ENCODE measurements at regions of chr6 and their contacts with region 1.

Region 1: GRCh38 chr6:3251462-3252314 is 7.1 kb upstream of the PSMG4 start:
- DNase-seq: peak; percentile 88
- H3K4me3 Mint-ChIP-seq: no peak overlapping the region
- H3K27ac Mint-ChIP-seq: no peak overlapping the region
- H3K4me1 Mint-ChIP-seq: peaks cover 5% of the 10 kb centered on the region
- H3K27me3 Mint-ChIP-seq: peaks cover 15% of the 10 kb centered on the region

Region 2: DNA sequence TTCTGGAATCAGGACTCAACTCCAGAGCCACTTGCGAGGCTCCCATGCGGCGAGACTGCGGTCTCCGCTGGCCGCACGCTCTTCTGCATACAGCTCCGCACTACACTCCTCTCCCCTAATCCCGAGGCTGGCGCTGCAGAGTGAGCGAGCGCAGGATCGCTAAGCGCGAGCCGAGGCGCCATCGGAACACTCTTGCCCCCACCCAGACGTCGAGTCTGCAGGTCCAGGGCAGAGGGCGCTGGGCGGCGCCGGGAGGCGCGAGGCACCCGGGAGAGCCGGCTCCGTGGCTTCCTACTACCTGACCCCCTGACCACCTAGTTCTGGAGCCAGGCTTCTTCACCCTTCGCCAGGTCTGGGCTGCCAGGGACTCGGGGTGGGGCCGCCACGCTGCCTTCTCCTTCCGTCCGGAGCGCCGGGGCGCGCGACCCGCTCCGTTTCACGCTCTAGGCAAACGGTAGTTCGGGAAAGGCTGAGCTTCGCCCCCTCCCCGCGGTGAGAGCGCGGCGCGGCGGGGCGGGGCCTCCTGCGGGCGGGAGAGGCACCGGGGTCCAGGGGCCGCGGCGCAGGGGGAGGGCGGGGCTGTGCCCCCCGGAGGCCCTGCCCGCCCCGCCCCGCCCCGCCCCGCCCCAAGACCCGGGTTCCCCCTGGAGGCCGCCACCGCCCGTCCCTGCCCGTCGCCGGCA is 89.0 kb before region 1 on chr6:
- CTCF ChIA-PET with region 1: interaction called, 12 read pairs
- intact Hi-C with region 1: no loop called
- DNase-seq: peak; percentile 57
- H3K4me3 Mint-ChIP-seq: peak overlapping the region; percentile 80
- H3K27ac Mint-ChIP-seq: no peak overlapping the region
- H3K4me1 Mint-ChIP-seq: peaks cover 24% of the 10 kb centered on the region
- H3K27me3 Mint-ChIP-seq: peaks cover 23% of the 10 kb centered on the region

Region 3: GRCh38 chr6:3231247-3232016 is 20.3 kb before region 1 on chr6:
- CTCF ChIA-PET with region 1: interaction called, 20 read pairs
- intact Hi-C with region 1: no loop called
- DNase-seq: no peak
- H3K4me3 Mint-ChIP-seq: peak overlapping the region; percentile 50
- H3K27ac Mint-ChIP-seq: no peak overlapping the region
- H3K4me1 Mint-ChIP-seq: peaks cover 43% of the 10 kb centered on the region
- H3K27me3 Mint-ChIP-seq: peaks cover 72% of the 10 kb centered on the region

Region 4: DNA sequence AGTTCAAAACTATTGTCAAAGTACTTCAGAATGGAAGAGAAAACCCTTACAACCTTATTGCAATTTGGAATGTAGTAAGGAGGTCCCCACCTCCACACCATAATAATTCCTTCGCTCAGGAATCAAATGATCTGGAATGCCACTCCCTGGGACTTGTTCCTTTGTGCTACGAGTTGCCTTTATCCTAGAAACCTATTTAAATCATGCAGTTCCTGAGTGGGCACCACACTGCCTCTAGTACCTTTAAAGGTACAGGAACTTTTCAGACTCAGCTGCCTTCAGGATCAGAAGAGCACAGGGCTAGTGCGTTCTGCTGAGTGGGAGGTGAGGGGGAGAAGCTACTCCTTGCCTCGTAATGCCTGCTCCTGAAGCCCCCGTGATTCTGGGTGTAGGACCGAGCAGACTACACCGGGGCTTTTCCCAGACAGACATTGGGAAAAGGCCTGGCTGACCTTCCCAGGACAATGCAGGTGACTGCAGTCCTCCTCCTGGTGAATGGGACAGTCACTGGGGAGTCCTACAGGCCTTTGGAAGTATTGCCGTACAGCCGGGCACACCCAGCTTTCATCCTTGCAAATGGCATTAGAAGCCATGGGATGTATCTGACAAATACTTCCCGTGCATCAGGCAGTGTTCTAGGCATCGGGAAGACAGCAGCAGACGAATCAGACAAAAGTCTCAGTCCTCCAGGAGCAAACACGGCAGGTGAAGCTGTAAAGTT is 12.4 kb before region 1 on chr6:
- CTCF ChIA-PET with region 1: interaction called, 12 read pairs
- intact Hi-C with region 1: no loop called
- DNase-seq: no peak
- H3K4me3 Mint-ChIP-seq: no peak overlapping the region
- H3K27ac Mint-ChIP-seq: no peak overlapping the region
- H3K4me1 Mint-ChIP-seq: no peaks in the 10 kb centered on the region
- H3K27me3 Mint-ChIP-seq: peaks cover 36% of the 10 kb centered on the region

Region 5: GRCh38 chr6:3585320-3585928 is 333.7 kb after region 1 on chr6:
- CTCF ChIA-PET with region 1: no interaction called
- intact Hi-C with region 1: no loop called
- DNase-seq: no peak
- H3K4me3 Mint-ChIP-seq: no peak overlapping the region
- H3K27ac Mint-ChIP-seq: no peak overlapping the region
- H3K4me1 Mint-ChIP-seq: no peaks in the 10 kb centered on the region
- H3K27me3 Mint-ChIP-seq: peaks cover 6% of the 10 kb centered on the region

Measured in activated naive CD4-positive, alpha-beta T cell treated with anti-CD3 and anti-CD28 coated beads for 36 hours (primary cell).